ENCODE measurements at regions of chr10 and their contacts with region 1.

Region 1: GRCh38 chr10:22003079-22003913 is at the start of gene DNAJC1:
- DNase-seq: peak; percentile 92
- H3K4me3 ChIP-seq: peak within 1 kb of the TSS; percentile 70 to 96 (median 92)
- H3K27ac ChIP-seq: peak within 1 kb of the TSS; percentile 87
- H3K4me1 ChIP-seq: peaks cover 6% of the 10 kb centered on the region
- H3K27me3 ChIP-seq: peaks cover 3% of the 10 kb centered on the region
- CTCF ChIP-seq: no peak
- total RNA-seq, gene DNAJC1: 33.0 to 56.5 TPM

Region 2: DNA sequence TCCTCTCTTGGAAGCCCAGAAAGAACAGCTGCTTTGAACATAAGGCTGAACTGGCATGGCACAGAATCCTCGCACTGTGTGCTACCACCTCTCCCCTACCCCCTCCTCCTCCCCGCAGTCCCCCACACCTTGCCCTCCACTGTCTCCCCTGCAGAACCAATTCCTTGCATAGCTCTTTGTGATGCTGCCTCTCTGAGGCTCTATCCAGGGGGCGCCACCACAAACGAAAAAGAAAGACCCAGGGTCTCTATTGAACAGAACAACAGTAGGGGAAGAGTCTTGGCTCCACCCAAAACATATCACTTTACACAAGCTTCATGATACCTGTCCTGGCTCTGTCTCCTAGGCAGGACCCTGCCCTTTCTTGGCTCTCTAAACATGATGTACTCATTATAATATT is 240.7 kb after region 1 on chr10:
- CTCF ChIA-PET with region 1: no interaction called
- dilution Hi-C with region 1: no loop called
- in situ Hi-C with region 1: no loop called
- intact Hi-C with region 1: loop called (anchors 5 kb)
- DNase-seq: no peak
- H3K4me3 ChIP-seq: no peak overlapping the region
- H3K27ac ChIP-seq: no peak overlapping the region
- H3K4me1 ChIP-seq: peaks cover 17% of the 10 kb centered on the region
- H3K27me3 ChIP-seq: no peaks in the 10 kb centered on the region
- CTCF ChIP-seq: no peak

Region 3: GRCh38 chr10:22340362-22341189 is 337.3 kb after region 1 on chr10:
- CTCF ChIA-PET with region 1: no interaction called
- dilution Hi-C with region 1: no loop called
- in situ Hi-C with region 1: no loop called
- intact Hi-C with region 1: loop called (anchors 5 kb)
- DNase-seq: peak; percentile 71
- H3K4me3 ChIP-seq: peak overlapping the region; percentile 71 to 87 (median 83)
- H3K27ac ChIP-seq: peak overlapping the region; percentile 69
- H3K4me1 ChIP-seq: peaks cover 21% of the 10 kb centered on the region
- H3K27me3 ChIP-seq: peaks cover 55% of the 10 kb centered on the region
- CTCF ChIP-seq: no peak

Region 4: DNA sequence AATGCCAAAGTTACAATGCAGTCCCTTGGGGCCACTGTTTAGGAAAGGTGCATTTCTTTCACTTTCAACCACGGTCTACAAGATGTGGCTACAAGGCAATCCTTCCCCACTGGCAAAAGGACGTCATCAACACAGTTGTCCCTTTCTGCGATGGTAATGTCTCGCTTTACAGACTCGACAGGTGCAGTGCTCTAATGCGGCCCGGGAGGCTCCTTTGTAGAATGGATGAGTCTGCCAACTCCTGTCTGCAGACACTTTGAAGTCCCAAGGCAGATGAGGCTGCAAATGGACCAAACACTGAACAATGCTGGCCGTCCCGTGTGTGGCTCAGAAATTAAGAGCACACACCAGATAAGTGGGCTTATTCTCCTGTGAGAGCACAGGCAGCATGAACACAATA is 577.4 kb after region 1 on chr10:
- CTCF ChIA-PET with region 1: no interaction called
- dilution Hi-C with region 1: no loop called
- in situ Hi-C with region 1: loop called in 1 of 2 experiments (anchors 25 kb)
- intact Hi-C with region 1: loop called (anchors 10 kb)
- DNase-seq: no peak
- H3K4me3 ChIP-seq: no peak overlapping the region
- H3K27ac ChIP-seq: no peak overlapping the region
- H3K4me1 ChIP-seq: no peaks in the 10 kb centered on the region
- H3K27me3 ChIP-seq: no peaks in the 10 kb centered on the region
- CTCF ChIP-seq: no peak

Measured in mammary epithelial cell (primary cell).